CD8-positive, alpha-beta memory T cell (primary cell): ENCODE measurements at regions of chr22 and their contacts with region 1.

Region 1: GRCh38 chr22:43346521-43346929 is 3.4 kb upstream of the SCUBE1 start:
- DNase-seq: peak; percentile 35 to 72 (median 56)
- H3K4me3 ChIP-seq: no peak overlapping the region
- H3K4me3 Mint-ChIP-seq: no peak overlapping the region
- H3K27ac ChIP-seq: no peak overlapping the region
- H3K27ac Mint-ChIP-seq: peak overlapping the region in 1 of 8 donors; percentile 43
- H3K4me1 ChIP-seq: no peaks in the 10 kb centered on the region
- H3K4me1 Mint-ChIP-seq: peaks cover 5 to 30% (median 9%) of the 10 kb centered on the region in 3 donors
- H3K27me3 ChIP-seq: peaks cover 12% of the 10 kb centered on the region
- H3K27me3 Mint-ChIP-seq: peaks cover 30 to 64% of the 10 kb centered on the region in 2 donors

Region 2: DNA sequence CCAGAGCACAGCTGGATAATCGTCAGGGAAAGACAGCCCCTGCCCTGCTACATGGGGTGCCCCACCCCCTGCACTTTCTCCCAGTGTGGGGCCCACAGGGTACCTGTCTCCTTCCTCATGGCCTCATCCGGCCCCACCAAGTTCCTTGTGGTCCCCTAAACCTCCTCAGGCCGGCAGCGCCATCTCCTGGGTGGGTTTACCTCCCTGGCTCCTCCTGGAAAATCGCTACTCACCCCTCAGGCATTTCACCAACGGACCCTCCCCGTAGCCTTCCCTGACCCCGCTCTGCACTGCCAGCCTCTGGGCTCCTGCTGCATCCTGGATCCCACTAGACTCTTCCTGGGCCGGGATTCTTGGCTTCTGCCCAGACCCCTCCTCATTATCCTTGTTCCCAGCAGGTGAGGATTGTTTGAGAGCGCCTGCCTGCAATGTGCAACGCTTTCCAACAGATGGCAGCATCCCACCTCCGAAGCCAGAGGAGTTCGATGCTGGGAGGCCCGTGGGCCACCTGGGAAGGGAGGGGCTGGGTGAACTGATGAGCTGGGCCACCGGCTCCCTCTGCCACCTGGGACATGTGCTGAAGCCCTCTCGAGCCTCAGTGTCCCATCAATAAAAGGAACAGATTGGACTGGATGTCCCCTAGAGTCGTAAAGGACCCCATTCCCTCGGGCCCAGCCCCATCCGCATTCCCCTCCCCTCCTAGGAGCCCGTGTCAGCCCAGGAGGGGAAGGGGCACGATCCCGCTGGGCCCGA is 115.4 kb before region 1 on chr22:
- CTCF ChIA-PET with region 1: interaction called, 90 read pairs
- POLR2A ChIA-PET with region 1: no interaction called
- DNase-seq: peak; percentile 41 to 76 (median 49)
- H3K4me3 ChIP-seq: no peak overlapping the region
- H3K4me3 Mint-ChIP-seq: no peak overlapping the region
- H3K27ac ChIP-seq: no peak overlapping the region
- H3K27ac Mint-ChIP-seq: no peak overlapping the region
- H3K4me1 ChIP-seq: peaks cover 4% of the 10 kb centered on the region
- H3K4me1 Mint-ChIP-seq: peaks cover 4 to 5% (median 5%) of the 10 kb centered on the region in 3 donors
- H3K27me3 ChIP-seq: no peaks in the 10 kb centered on the region
- H3K27me3 Mint-ChIP-seq: peaks cover 3 to 8% of the 10 kb centered on the region in 2 donors

Region 3: GRCh38 chr22:43263645-43264514 is 82.6 kb before region 1 on chr22:
- CTCF ChIA-PET with region 1: interaction called, 20 read pairs
- POLR2A ChIA-PET with region 1: no interaction called
- DNase-seq: peak; percentile 60 to 95 (median 79)
- H3K4me3 ChIP-seq: peak overlapping the region; percentile 44
- H3K4me3 Mint-ChIP-seq: peak overlapping the region; percentile 65 to 88 (median 84)
- H3K27ac ChIP-seq: peak overlapping the region; percentile 68
- H3K27ac Mint-ChIP-seq: peak overlapping the region; percentile 86 to 98 (median 96)
- H3K4me1 ChIP-seq: peaks cover 26% of the 10 kb centered on the region
- H3K4me1 Mint-ChIP-seq: peaks cover 26 to 33% (median 32%) of the 10 kb centered on the region in 3 donors
- H3K27me3 ChIP-seq: no peaks in the 10 kb centered on the region
- H3K27me3 Mint-ChIP-seq: no peaks in the 10 kb centered on the region

Region 4: GRCh38 chr22:43273902-43274484 is 72.5 kb before region 1 on chr22:
- CTCF ChIA-PET with region 1: interaction called, 61 read pairs
- POLR2A ChIA-PET with region 1: no interaction called
- DNase-seq: peak in 4 of 5 donors; percentile 17 to 55 (median 33)
- H3K4me3 ChIP-seq: no peak overlapping the region
- H3K4me3 Mint-ChIP-seq: no peak overlapping the region
- H3K27ac ChIP-seq: no peak overlapping the region
- H3K27ac Mint-ChIP-seq: peak overlapping the region in 1 of 8 donors; percentile 20
- H3K4me1 ChIP-seq: no peaks in the 10 kb centered on the region
- H3K4me1 Mint-ChIP-seq: peaks cover 4 to 5% (median 4%) of the 10 kb centered on the region in 3 donors
- H3K27me3 ChIP-seq: no peaks in the 10 kb centered on the region
- H3K27me3 Mint-ChIP-seq: peaks cover 2 to 5% of the 10 kb centered on the region in 2 donors

Region 5: DNA sequence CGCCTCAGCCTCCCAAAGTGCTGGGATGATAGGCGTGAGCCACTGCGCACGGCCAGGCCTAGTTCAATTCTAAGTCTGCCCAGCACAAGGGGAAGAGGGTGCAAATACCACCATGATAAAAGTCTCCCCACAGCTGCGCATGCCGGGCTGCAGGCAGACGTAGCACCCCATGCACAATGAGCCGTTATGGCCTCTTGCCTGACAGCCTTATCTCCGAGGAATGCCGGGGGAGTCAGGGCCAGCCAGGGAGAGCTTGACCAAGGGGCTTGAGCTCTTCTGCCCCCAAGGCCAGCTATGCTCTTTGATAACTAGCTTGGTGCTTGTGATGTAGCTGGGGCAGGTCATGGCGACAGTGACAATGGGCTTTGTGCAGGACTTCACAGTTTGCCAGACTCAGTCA is 10.4 kb after region 1 on chr22:
- CTCF ChIA-PET with region 1: interaction called, 19 read pairs
- POLR2A ChIA-PET with region 1: no interaction called
- DNase-seq: no peak
- H3K4me3 ChIP-seq: no peak overlapping the region
- H3K4me3 Mint-ChIP-seq: no peak overlapping the region
- H3K27ac ChIP-seq: no peak overlapping the region
- H3K27ac Mint-ChIP-seq: no peak overlapping the region
- H3K4me1 ChIP-seq: no peaks in the 10 kb centered on the region
- H3K4me1 Mint-ChIP-seq: no peaks in the 10 kb centered on the region
- H3K27me3 ChIP-seq: no peaks in the 10 kb centered on the region
- H3K27me3 Mint-ChIP-seq: peaks cover 9 to 17% of the 10 kb centered on the region in 2 donors

Region 6: GRCh38 chr22:43385770-43386641 is 39.5 kb after region 1 on chr22:
- CTCF ChIA-PET with region 1: interaction called, 38 read pairs
- POLR2A ChIA-PET with region 1: no interaction called
- DNase-seq: peak; percentile 54 to 82 (median 61)
- H3K4me3 ChIP-seq: no peak overlapping the region
- H3K4me3 Mint-ChIP-seq: peak overlapping the region in 2 of 7 donors; percentile 20 to 47
- H3K27ac ChIP-seq: no peak overlapping the region
- H3K27ac Mint-ChIP-seq: no peak overlapping the region
- H3K4me1 ChIP-seq: peaks cover 3% of the 10 kb centered on the region
- H3K4me1 Mint-ChIP-seq: peaks cover 11 to 23% (median 16%) of the 10 kb centered on the region in 3 donors
- H3K27me3 ChIP-seq: peaks cover 11% of the 10 kb centered on the region
- H3K27me3 Mint-ChIP-seq: peaks cover 17 to 24% of the 10 kb centered on the region in 2 donors

Region 7: DNA sequence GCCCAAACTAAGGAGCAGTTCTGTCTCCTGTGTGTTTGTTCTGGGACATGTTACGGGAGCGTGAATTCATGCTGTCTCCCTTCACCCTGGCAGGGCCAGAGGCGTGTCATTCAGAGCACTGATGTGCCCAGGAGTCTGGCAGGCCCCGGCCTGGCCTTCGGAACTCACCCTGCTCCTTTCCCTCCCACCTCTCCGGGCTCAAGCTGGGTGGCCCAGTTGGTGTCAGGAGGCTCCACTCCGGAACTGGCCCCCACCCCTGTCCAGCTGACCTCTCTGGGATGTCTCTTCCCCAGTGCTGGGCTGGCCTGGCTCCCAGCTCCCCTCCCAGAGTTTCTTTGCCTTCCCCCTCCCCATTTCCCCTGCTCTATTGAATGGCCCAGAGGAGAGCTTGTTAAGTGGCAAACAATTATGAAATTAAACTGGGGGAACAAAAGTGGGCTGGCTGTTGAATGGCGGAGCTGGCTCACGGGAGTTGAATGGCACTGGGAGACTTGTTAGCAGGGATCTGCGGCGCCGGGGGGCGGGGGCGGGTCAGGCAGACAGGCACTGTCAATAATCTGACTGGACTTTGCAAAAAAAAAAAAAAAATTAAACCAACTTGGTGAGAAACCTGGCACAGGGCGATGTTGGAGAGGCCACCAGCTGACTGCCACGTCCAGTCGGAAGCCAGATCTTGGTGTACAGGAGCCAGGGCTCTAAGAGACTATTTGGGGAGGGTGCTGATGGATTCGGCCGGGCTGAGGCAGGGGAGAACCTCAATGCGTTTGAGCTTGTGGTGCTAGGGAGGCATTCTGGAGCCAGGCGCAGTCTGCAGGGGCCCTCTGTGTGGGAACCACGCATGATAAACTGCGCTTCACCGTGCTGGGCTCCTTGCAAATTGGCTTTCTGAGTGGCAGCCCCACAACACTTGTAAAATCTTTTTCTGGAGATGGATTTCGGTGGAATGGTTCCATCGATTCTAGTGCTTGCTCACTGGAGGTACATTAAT is 66.6 kb after region 1 on chr22:
- CTCF ChIA-PET with region 1: no interaction called
- POLR2A ChIA-PET with region 1: no interaction called
- DNase-seq: no peak
- H3K4me3 ChIP-seq: no peak overlapping the region
- H3K4me3 Mint-ChIP-seq: peak overlapping the region in 2 of 7 donors; percentile 28 to 74
- H3K27ac ChIP-seq: no peak overlapping the region
- H3K27ac Mint-ChIP-seq: no peak overlapping the region
- H3K4me1 ChIP-seq: no peaks in the 10 kb centered on the region
- H3K4me1 Mint-ChIP-seq: peaks cover 0 to 3% (median 0%) of the 10 kb centered on the region in 3 donors
- H3K27me3 ChIP-seq: peaks cover 17% of the 10 kb centered on the region
- H3K27me3 Mint-ChIP-seq: peaks cover 36 to 77% of the 10 kb centered on the region in 2 donors